Right ventricle myocardium inferior (tissue), 1 donor: ENCODE measurements at regions of chr6 and their contacts with region 1.

Region 1: GRCh38 chr6:114119056-114119455 is 148.1 kb upstream of the HDAC2 start:
- DNase-seq: no peak
- ATAC-seq: no peak

Region 2: GRCh38 chr6:113994918-113995342 is 124.1 kb before region 1 on chr6:
- intact Hi-C with region 1: loop called (anchors 10 kb)
- DNase-seq: no peak
- ATAC-seq: no peak

Region 3: DNA sequence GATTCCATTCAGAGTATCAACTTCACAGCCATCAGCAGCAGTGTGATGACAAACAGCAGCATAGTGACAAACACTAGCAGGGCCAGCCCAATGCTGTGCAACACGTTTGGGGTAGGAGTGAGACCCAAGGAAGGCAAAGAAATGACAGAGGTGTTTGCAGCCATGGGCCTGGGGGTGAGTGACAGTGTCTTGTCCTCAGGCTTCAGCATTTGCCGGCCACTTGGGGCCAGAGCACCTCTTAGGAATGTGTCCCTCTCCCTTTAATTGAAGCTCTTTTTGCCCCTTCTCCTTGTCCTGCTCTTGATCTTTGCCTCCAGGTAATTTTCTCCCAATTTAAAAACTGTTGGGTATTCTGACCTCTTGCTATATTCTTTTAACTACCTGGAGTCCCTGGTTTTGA is 139.3 kb after region 1 on chr6:
- intact Hi-C with region 1: no loop called
- DNase-seq: no peak
- ATAC-seq: no peak